Dorsolateral prefrontal cortex (tissue), 120 donors: ENCODE measurements at regions of chr16 and their contacts with region 1.

Region 1: GRCh38 chr16:5874899-5875298 is 777.3 kb upstream of the EEF2KMT start:
- DNase-seq: no peak
- H3K4me3 ChIP-seq: no peak overlapping the region
- H3K27ac ChIP-seq: peak overlapping the region in 5 of 59 donors; percentile 34 to 47 (median 44)
- H3K27me3 ChIP-seq: peaks cover 0 to 4% (median 0%) of the 10 kb centered on the region in 45 donors
- CTCF ChIP-seq: no peak

Region 2: GRCh38 chr16:5649762-5650743 is 224.8 kb before region 1 on chr16:
- intact Hi-C with region 1: loop called in 1 of 2 experiments (anchors 10 kb)
- DNase-seq: no peak
- H3K4me3 ChIP-seq: no peak overlapping the region
- H3K27ac ChIP-seq: no peak overlapping the region
- H3K27me3 ChIP-seq: peaks cover 0 to 11% (median 0%) of the 10 kb centered on the region in 45 donors
- CTCF ChIP-seq: no peak